ENCODE measurements at regions of chr7 and their contacts with region 1.

Region 1: DNA sequence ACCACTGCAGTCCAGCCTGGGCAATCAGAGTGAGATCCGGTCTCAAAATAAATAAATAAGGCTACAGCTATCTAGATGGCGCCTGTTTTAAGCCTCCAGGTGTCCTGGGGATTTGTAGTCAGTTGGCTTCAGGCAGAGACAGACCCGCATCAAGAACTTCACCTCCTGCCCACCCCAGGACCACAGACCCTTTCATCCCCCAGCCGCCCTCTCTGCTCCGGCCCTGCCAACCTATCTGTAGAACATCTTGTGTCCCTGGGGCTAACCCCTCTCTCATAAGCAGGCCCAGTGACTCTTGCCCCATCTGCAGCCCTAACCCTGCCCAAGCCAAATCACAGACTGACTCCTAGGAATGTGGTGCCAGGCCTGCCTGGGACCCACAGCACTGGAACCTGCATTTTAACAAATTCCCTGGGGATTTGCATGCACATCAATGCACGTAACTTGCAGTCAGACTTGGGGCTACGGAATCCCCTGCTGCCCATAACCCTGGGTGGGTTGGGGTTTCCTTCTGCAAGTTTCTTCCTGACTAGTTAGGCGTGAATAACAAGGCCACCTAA is 17.8 kb downstream of the PDIA4 start:
- DNase-seq: no peak
- H3K4me3 ChIP-seq: no peak overlapping the region
- H3K4me3 Mint-ChIP-seq: no peak overlapping the region
- H3K27ac ChIP-seq: no peak overlapping the region
- H3K27ac Mint-ChIP-seq: peak overlapping the region in 1 of 7 donors; percentile 44
- H3K4me1 ChIP-seq: peaks cover 4% of the 10 kb centered on the region
- H3K4me1 Mint-ChIP-seq: peaks cover 4 to 10% (median 7%) of the 10 kb centered on the region in 4 donors
- H3K27me3 ChIP-seq: no peaks in the 10 kb centered on the region
- H3K27me3 Mint-ChIP-seq: no peaks in the 10 kb centered on the region

Region 2: DNA sequence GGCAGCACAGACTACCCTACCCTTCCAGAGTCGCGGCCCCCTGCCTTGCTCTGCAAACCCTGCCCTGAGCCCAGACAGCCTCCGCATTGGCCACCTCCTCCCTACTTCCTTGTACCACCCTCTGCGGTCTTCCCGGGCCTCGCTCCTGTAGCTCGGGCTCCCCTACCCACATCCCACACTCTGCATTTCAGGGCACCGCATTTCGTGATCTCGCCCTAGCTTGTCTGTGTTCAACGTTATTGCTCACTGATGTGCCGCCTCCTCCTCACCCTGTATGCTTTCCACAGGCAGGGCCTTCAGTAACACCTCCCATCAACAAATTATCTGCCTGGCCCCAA is 11.2 kb after region 1 on chr7:
- CTCF ChIA-PET with region 1: interaction called, 84 read pairs
- POLR2A ChIA-PET with region 1: interaction called, 3 read pairs
- intact Hi-C with region 1: no loop called
- DNase-seq: no peak
- H3K4me3 ChIP-seq: no peak overlapping the region
- H3K4me3 Mint-ChIP-seq: no peak overlapping the region
- H3K27ac ChIP-seq: no peak overlapping the region
- H3K27ac Mint-ChIP-seq: peak overlapping the region in 4 of 7 donors; percentile 30 to 84 (median 49)
- H3K4me1 ChIP-seq: peaks cover 16% of the 10 kb centered on the region
- H3K4me1 Mint-ChIP-seq: peaks cover 29 to 44% (median 37%) of the 10 kb centered on the region in 4 donors
- H3K27me3 ChIP-seq: no peaks in the 10 kb centered on the region
- H3K27me3 Mint-ChIP-seq: no peaks in the 10 kb centered on the region

Region 3: DNA sequence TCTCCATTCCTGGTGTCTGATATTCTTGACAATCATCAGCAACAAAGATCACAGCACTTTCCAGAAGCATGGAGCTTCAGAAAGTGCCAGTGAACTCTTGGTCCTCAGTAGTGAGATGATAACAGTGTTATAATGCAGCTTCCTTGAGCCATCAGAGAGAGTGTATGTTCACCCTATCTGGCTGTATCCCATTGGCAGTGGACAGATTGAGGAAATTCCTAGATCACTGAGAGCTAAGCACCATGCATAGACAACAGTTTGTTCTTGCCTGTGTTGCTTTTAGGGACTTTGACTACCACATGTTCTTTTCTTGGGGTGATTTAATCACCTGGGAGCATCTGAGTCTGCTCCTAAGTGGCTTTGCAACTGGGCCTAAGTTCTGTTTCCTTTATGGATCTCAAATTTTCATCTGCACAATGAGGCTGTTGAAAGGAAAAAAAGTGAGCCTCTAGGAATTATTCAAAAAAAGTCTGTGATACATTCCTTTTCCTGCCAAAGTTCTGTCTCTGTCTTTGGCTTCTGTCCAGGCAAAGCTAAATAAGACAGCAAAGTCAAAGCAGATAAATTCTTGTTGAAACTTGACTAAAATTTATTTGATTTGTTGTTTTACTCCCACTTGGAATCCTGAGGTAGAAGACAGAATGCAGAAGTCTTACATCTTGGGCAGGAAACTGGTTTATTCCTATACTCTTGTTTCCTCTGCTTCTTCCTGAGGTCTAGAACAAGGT is 170.4 kb after region 1 on chr7:
- CTCF ChIA-PET with region 1: no interaction called
- POLR2A ChIA-PET with region 1: no interaction called
- intact Hi-C with region 1: no loop called
- DNase-seq: no peak
- H3K4me3 ChIP-seq: no peak overlapping the region
- H3K4me3 Mint-ChIP-seq: no peak overlapping the region
- H3K27ac ChIP-seq: no peak overlapping the region
- H3K27ac Mint-ChIP-seq: no peak overlapping the region
- H3K4me1 ChIP-seq: no peaks in the 10 kb centered on the region
- H3K4me1 Mint-ChIP-seq: peaks cover 0 to 1% (median 0%) of the 10 kb centered on the region in 4 donors
- H3K27me3 ChIP-seq: no peaks in the 10 kb centered on the region
- H3K27me3 Mint-ChIP-seq: no peaks in the 10 kb centered on the region